K562 (cell line): ENCODE measurements at regions of chr6 and their contacts with region 1.

Region 1: GRCh38 chr6:68343901-68344300 is 291.2 kb upstream of the ADGRB3 start:
- DNase-seq: peak; percentile 53 to 82 (median 62)
- ATAC-seq: peak; percentile 99
- H3K4me3 ChIP-seq: no peak overlapping the region
- H3K27ac ChIP-seq: no peak overlapping the region
- H3K4me1 ChIP-seq: no peaks in the 10 kb centered on the region
- H3K27me3 ChIP-seq: no peaks in the 10 kb centered on the region
- CTCF ChIP-seq: peak; percentile 84 to 97 (median 97)
- EP300 ChIP-seq: no peak
- POLR2A ChIP-seq: no peak
- RAD21 ChIP-seq: peak; percentile 85 to 88

Region 2: GRCh38 chr6:68273297-68273696 is 70.6 kb before region 1 on chr6:
- CTCF ChIA-PET with region 1: no interaction called
- POLR2A ChIA-PET with region 1: no interaction called
- in situ Hi-C with region 1: no loop called
- intact Hi-C with region 1: no loop called
- DNase-seq: no peak
- ATAC-seq: no peak
- H3K4me3 ChIP-seq: no peak overlapping the region
- H3K27ac ChIP-seq: no peak overlapping the region
- H3K4me1 ChIP-seq: no peaks in the 10 kb centered on the region
- H3K27me3 ChIP-seq: no peaks in the 10 kb centered on the region
- CTCF ChIP-seq: no peak
- EP300 ChIP-seq: no peak
- POLR2A ChIP-seq: no peak
- RAD21 ChIP-seq: no peak

Region 3: DNA sequence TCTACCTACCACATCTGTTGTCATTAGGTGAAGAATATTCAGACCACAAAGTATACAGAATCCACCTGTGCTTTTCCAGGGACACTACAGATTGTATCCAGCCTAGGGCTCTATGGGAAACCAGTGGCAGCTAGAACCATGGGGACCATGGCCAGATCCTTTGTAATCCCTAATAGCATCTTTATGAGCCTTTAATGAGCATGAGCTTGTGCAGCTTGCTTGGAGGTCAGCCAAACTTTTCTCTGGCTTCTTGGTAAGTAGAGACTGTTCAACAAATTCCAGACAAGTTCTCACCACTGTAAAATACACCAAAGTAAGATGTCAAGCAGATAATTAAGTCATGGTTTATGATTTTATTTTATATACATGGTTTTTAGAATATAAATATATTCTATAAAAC is 10.5 kb before region 1 on chr6:
- CTCF ChIA-PET with region 1: no interaction called
- POLR2A ChIA-PET with region 1: no interaction called
- in situ Hi-C with region 1: no loop called
- intact Hi-C with region 1: no loop called
- DNase-seq: no peak
- ATAC-seq: no peak
- H3K4me3 ChIP-seq: no peak overlapping the region
- H3K27ac ChIP-seq: no peak overlapping the region
- H3K4me1 ChIP-seq: no peaks in the 10 kb centered on the region
- H3K27me3 ChIP-seq: no peaks in the 10 kb centered on the region
- CTCF ChIP-seq: no peak
- EP300 ChIP-seq: no peak
- POLR2A ChIP-seq: no peak
- RAD21 ChIP-seq: no peak

Region 4: GRCh38 chr6:68468244-68468884 is 124.5 kb after region 1 on chr6:
- CTCF ChIA-PET with region 1: no interaction called
- POLR2A ChIA-PET with region 1: no interaction called
- in situ Hi-C with region 1: no loop called
- intact Hi-C with region 1: loop called (anchors 1 kb)
- DNase-seq: peak; percentile 13 to 50 (median 20)
- ATAC-seq: peak; percentile 64; the same call in 2 of the 3 replicates
- H3K4me3 ChIP-seq: no peak overlapping the region
- H3K27ac ChIP-seq: no peak overlapping the region
- H3K4me1 ChIP-seq: no peaks in the 10 kb centered on the region
- H3K27me3 ChIP-seq: no peaks in the 10 kb centered on the region
- CTCF ChIP-seq: peak; percentile 40 to 62 (median 55); a peak in 5 of 6 replicates
- EP300 ChIP-seq: no peak; the same call in 1 of the 2 replicates
- POLR2A ChIP-seq: no peak
- RAD21 ChIP-seq: peak; percentile 13 to 23; a peak in 1 of 4 replicates

Region 5: DNA sequence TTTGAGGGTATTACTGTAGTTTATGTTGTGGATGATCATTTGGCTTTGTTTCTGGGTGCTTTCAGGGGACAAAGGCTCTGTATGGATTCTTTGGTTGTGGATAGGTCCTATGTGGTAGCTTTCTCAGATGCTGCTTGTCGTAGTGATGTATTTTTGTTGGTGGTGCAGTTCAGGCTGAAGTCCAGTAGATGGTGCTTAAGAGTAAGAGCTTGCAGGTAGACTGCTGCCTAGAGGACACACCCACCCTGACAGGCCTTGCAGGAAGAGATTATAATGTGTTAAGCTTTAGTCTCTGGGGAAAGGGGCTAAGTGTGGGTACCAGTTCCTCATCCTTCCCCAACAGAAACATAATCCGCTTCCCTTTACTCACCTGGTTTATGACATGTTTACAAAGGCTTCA is 228.6 kb after region 1 on chr6:
- CTCF ChIA-PET with region 1: no interaction called
- POLR2A ChIA-PET with region 1: no interaction called
- in situ Hi-C with region 1: no loop called
- intact Hi-C with region 1: loop called (anchors 10 kb)
- DNase-seq: peak; percentile 51 to 83 (median 62)
- ATAC-seq: peak; percentile 92
- H3K4me3 ChIP-seq: no peak overlapping the region
- H3K27ac ChIP-seq: no peak overlapping the region
- H3K4me1 ChIP-seq: no peaks in the 10 kb centered on the region
- H3K27me3 ChIP-seq: no peaks in the 10 kb centered on the region
- CTCF ChIP-seq: peak; percentile 80 to 95 (median 94)
- EP300 ChIP-seq: no peak
- POLR2A ChIP-seq: no peak
- RAD21 ChIP-seq: peak; percentile 76 to 89

Region 6: GRCh38 chr6:69044534-69044933 is 700.6 kb after region 1 on chr6:
- CTCF ChIA-PET with region 1: no interaction called
- POLR2A ChIA-PET with region 1: no interaction called
- in situ Hi-C with region 1: no loop called
- intact Hi-C with region 1: no loop called
- DNase-seq: no peak
- ATAC-seq: no peak
- H3K4me3 ChIP-seq: no peak overlapping the region
- H3K27ac ChIP-seq: no peak overlapping the region
- H3K4me1 ChIP-seq: peaks cover 0 to 5% of the 10 kb centered on the region in 2 experiments; a peak in 1 of 5 replicates
- H3K27me3 ChIP-seq: no peaks in the 10 kb centered on the region
- CTCF ChIP-seq: no peak
- EP300 ChIP-seq: no peak
- POLR2A ChIP-seq: no peak
- RAD21 ChIP-seq: no peak

Region 7: DNA sequence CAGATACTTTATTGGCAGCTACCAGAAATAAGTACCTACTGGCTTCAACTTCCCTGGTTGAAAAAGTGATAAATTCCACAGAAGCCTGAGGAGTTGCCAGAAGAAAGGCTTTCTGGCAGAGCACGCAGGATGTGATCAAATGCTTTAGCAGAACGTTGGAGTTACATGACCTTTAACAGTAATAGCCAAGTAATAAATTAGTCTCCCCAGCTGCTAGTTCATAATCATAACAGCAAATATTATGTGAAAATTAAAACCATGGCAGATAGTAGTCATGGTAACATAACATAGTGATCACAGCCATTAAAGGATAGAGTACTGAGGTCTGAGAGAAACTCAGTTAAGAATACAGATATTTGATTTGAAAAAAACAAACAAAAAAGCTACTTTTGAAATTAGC is 858.9 kb after region 1 on chr6:
- CTCF ChIA-PET with region 1: no interaction called
- POLR2A ChIA-PET with region 1: no interaction called
- in situ Hi-C with region 1: no loop called
- intact Hi-C with region 1: no loop called
- DNase-seq: no peak
- ATAC-seq: no peak
- H3K4me3 ChIP-seq: no peak overlapping the region
- H3K27ac ChIP-seq: no peak overlapping the region
- H3K4me1 ChIP-seq: no peaks in the 10 kb centered on the region
- H3K27me3 ChIP-seq: no peaks in the 10 kb centered on the region
- CTCF ChIP-seq: no peak
- EP300 ChIP-seq: no peak
- POLR2A ChIP-seq: no peak
- RAD21 ChIP-seq: no peak